Spleen (tissue), 13 donors: ENCODE measurements at regions of chr17 and their contacts with region 1.

Region 1: GRCh38 chr17:3012926-3013581 is 50.4 kb downstream of the OR1D5 start:
- DNase-seq: peak; percentile 87
- H3K4me3 ChIP-seq: no peak overlapping the region
- H3K27ac ChIP-seq: no peak overlapping the region
- H3K4me1 ChIP-seq: no peaks in the 10 kb centered on the region
- H3K27me3 ChIP-seq: no peaks in the 10 kb centered on the region
- CTCF ChIP-seq: peak; percentile 69 to 92 (median 86)
- POLR2A ChIP-seq: no peak

Region 2: GRCh38 chr17:2786176-2786881 is 226.7 kb before region 1 on chr17:
- intact Hi-C with region 1: loop called (anchors 5 kb)
- DNase-seq: peak; percentile 97
- H3K4me3 ChIP-seq: peak overlapping the region in 1 of 8 donors; percentile 0
- H3K27ac ChIP-seq: peak overlapping the region in 2 of 8 donors; percentile 43 to 71
- H3K4me1 ChIP-seq: peaks cover 3 to 35% (median 20%) of the 10 kb centered on the region in 6 donors
- H3K27me3 ChIP-seq: peaks cover 0 to 28% (median 7%) of the 10 kb centered on the region in 7 donors
- CTCF ChIP-seq: peak; percentile 85 to 97 (median 93)
- POLR2A ChIP-seq: no peak

Region 3: GRCh38 chr17:2828397-2829038 is 184.5 kb before region 1 on chr17:
- intact Hi-C with region 1: loop called (anchors 5 kb)
- DNase-seq: peak; percentile 95
- H3K4me3 ChIP-seq: no peak overlapping the region
- H3K27ac ChIP-seq: no peak overlapping the region
- H3K4me1 ChIP-seq: peaks cover 3 to 48% (median 25%) of the 10 kb centered on the region in 6 donors
- H3K27me3 ChIP-seq: peaks cover 0 to 53% (median 0%) of the 10 kb centered on the region in 7 donors
- CTCF ChIP-seq: peak; percentile 71 to 92 (median 88)
- POLR2A ChIP-seq: no peak

Region 4: DNA sequence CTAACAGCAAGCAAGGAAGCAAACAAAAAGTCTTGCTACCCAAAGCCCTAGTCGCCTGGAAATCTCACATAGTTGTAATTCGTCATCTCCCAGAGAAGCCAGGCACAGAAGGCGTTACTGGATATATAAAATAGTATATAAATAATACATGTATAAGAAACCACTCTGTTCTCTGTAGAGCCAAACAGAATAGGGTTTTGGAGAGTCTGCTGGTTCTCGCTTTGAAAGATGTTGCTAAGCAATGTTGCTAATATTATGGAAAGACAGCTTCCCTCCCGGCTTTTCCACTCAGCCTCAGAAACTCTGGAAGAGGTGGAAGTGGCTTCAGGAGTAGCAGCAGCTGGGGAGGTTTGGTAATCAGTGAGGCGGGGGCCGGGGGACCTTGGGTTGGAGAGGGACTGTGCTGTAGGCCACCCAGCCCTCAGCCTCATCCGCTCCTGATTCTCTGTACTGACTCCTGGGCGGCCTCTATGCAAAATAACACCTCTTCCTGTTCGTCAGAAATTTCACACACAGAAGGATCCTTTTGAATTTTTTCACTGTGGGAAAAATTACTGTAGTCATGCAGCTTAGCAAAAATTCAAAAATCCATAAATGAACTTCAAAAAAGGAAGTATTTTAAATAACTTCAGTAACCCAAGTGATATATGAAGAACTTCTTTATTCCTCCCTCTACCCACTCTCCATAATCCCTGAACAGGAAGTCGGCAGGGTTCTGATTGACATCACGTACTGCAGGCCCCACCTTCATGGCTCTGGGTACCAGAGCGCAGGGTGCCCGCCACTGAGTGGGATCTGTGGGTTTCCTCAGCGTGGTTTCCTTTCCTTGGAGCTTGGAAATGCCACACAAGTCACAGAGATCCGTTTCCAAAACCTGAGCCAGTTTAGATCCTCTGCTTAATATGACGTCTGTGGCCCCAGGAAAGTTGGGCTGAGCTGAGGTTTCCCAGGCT is 165.4 kb before region 1 on chr17:
- intact Hi-C with region 1: loop called (anchors 5 kb)
- DNase-seq: no peak
- H3K4me3 ChIP-seq: no peak overlapping the region
- H3K27ac ChIP-seq: no peak overlapping the region
- H3K4me1 ChIP-seq: peaks cover 4 to 35% (median 20%) of the 10 kb centered on the region in 6 donors
- H3K27me3 ChIP-seq: peaks cover 0 to 88% (median 8%) of the 10 kb centered on the region in 7 donors
- CTCF ChIP-seq: no peak
- POLR2A ChIP-seq: no peak